Astrocyte of the cerebellum (primary cell): ENCODE measurements at regions of chr5 and their contacts with region 1.

Region 1: GRCh38 chr5:43854697-43855292 is 251.8 kb downstream of the NNT start:
- DNase-seq: no peak
- H3K4me3 ChIP-seq: no peak overlapping the region
- CTCF ChIP-seq: no peak

Region 2: GRCh38 chr5:43498581-43498980 is 356.2 kb before region 1 on chr5:
- in situ Hi-C with region 1: no loop called
- DNase-seq: no peak
- H3K4me3 ChIP-seq: no peak overlapping the region
- CTCF ChIP-seq: no peak

Region 3: GRCh38 chr5:43753069-43753468 is 101.7 kb before region 1 on chr5:
- in situ Hi-C with region 1: no loop called
- DNase-seq: no peak
- H3K4me3 ChIP-seq: no peak overlapping the region
- CTCF ChIP-seq: no peak

Region 4: GRCh38 chr5:43815504-43815903 is 39.3 kb before region 1 on chr5:
- in situ Hi-C with region 1: loop called (anchors 5 kb)
- DNase-seq: no peak
- H3K4me3 ChIP-seq: no peak overlapping the region
- CTCF ChIP-seq: no peak

Region 5: DNA sequence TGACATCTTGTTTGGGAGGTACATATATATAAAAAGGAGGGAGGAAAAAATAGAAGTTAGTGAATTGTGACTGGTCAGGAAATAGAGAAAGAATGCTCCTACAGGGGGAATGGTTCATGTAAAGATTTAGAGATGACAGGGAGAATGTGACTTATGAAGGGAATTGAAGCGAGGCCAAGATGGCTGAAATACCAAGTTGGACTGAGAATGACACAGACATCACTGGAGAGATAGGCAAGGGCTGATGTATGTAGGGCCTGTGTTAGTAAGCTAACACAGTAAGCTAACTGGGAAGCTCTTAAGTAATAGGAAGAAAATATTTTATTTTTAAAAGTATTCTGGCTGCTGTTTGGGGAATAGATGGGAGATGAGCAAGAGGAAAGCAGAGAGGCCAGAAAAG is 34.4 kb after region 1 on chr5:
- in situ Hi-C with region 1: no loop called
- DNase-seq: no peak
- H3K4me3 ChIP-seq: no peak overlapping the region
- CTCF ChIP-seq: no peak

Region 6: GRCh38 chr5:43926923-43927322 is 72.1 kb after region 1 on chr5:
- in situ Hi-C with region 1: no loop called
- DNase-seq: no peak
- H3K4me3 ChIP-seq: no peak overlapping the region
- CTCF ChIP-seq: no peak